Posterior cingulate gyrus (tissue), 11 donors: ENCODE measurements at regions of chr19 and their contacts with region 1.

Region 1: GRCh38 chr19:1239798-1240737 is 1.5 kb upstream of the ATP5F1D start:
- DNase-seq: peak; percentile 73 to 99 (median 88)

Region 2: DNA sequence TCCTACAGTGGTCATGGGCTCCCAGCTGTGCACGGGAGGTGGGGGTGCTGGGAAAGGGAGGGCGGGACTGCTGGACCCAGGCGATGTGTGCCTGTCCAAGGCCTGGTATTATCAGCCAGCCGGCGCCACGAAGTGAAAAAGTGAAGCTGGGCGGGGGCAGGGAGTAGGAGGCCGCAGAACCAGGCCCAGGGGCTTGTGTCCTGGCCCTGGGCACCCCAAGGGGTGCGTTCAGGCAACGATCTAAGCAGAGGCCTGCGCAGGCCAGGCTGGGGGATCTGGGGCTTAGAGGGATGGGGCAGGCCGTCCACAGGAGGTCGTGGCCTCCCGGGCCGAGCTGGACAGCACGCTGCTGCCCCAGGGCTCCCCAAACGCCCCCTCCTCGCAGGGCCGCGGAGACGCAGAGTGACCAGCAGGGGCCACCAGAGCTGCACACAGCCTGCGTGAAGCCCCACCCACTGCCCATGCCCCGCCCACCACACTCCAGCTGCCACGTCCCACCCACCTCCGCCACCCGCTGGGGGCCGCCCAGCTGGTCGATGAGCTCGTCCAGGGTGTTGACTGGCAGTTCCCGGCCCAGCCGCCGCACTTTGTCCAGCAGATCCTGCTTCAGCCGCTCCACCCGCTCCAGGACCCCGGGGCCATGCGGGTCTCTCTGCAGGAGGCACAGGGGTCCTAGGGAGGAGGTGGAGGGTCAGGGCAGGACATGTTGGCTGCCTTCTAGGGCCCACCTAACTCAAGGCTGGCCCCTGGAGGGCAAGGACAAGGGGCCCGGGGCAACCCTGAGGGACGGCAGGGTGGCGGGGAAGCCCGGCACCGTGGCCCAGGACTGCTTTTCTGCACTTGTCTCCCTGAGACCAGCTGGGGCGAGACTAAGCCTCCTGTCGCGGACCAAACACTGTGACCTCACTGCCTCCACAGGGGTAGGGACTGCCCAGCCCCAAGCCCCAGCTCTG is 126.8 kb before region 1 on chr19:
- intact Hi-C with region 1: loop called (anchors 5 kb)
- DNase-seq: peak; percentile 89 to 99 (median 96)

Region 3: DNA sequence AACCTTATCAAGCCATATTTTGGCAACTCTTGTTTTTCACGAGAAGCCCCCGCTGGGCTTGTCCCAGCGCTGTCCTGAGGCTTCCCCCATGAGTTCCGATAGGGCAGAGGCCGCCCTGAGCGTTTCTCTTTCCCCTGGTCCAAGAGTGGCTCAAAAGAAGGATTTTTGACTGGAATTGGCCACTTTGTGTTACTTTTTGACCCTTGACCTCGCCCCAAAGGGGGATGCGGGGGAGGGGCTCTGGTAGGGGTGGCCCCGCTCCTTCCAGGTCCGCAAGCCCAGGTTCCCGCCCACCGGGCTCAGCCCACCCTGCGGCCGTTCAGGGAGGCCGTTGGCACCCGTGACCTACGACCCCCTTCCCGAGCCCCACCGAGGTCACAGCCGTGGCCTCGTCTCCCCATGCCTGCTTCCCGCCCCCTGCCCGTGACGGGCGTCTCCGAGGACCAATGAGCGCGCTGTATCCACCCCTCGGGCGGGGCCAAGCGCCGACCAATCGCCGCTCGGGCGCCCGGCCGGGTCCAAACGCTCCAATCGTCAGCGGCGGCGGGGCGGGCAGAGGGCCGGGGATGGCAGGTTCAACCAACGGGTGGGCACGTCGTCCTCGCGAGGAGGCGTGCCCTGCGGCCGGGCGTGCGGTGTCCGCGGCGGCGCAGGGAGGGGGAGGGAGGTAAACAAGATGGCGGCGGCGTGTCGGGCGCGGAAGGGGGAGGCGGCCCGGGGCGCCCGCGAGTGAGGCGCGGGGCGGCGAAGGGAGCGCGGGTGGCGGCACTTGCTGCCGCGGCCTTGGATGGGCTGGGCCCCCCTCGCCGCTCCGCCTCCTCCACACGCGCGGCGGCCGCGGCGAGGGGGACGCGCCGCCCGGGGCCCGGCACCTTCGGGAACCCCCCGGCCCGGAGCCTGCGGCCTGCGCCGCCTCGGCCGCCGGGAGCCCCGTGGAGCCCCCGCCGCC is 34.7 kb before region 1 on chr19 and contains the start of gene STK11:
- intact Hi-C with region 1: no loop called
- DNase-seq: peak; percentile 98 to 100 (median 99)

Region 4: GRCh38 chr19:1221141-1221903 is 18.7 kb before region 1 on chr19:
- intact Hi-C with region 1: loop called (anchors 1 kb)
- DNase-seq: peak in 9 of 10 donors; percentile 62 to 96 (median 71)

Region 5: GRCh38 chr19:1266916-1267476 is 26.9 kb after region 1 on chr19:
- intact Hi-C with region 1: loop called (anchors 1 kb)
- DNase-seq: peak in 9 of 10 donors; percentile 61 to 96 (median 77)